ENCODE measurements at regions of chr7 and their contacts with region 1.

Region 1: GRCh38 chr7:155559519-155560108 is 13.3 kb upstream of the CNPY1 start:
- DNase-seq: no peak
- ATAC-seq: no peak
- H3K4me3 ChIP-seq: no peak overlapping the region
- H3K27ac ChIP-seq: no peak overlapping the region
- H3K4me1 ChIP-seq: peaks cover 0 to 4% (median 0%) of the 10 kb centered on the region in 12 donors
- H3K27me3 ChIP-seq: peaks cover 0 to 22% (median 0%) of the 10 kb centered on the region in 9 donors
- CTCF ChIP-seq: no peak
- POLR2A ChIP-seq: no peak

Region 2: GRCh38 chr7:155412537-155413253 is 146.9 kb before region 1 on chr7:
- intact Hi-C with region 1: loop called in 1 of 10 experiments (anchors 10 kb)
- DNase-seq: no peak
- ATAC-seq: peak in 3 of 4 donors; percentile 41 to 55 (median 47)
- H3K4me3 ChIP-seq: no peak overlapping the region
- H3K27ac ChIP-seq: no peak overlapping the region
- H3K4me1 ChIP-seq: no peaks in the 10 kb centered on the region
- H3K27me3 ChIP-seq: peaks cover 5 to 52% (median 16%) of the 10 kb centered on the region in 9 donors
- CTCF ChIP-seq: peak; percentile 32 to 64 (median 52)
- POLR2A ChIP-seq: no peak

Region 3: GRCh38 chr7:155850729-155851678 is 291.4 kb after region 1 on chr7:
- intact Hi-C with region 1: no loop called
- DNase-seq: peak in 1 of 5 donors; percentile 12
- ATAC-seq: no peak
- H3K4me3 ChIP-seq: no peak overlapping the region
- H3K27ac ChIP-seq: no peak overlapping the region
- H3K4me1 ChIP-seq: no peaks in the 10 kb centered on the region
- H3K27me3 ChIP-seq: peaks cover 0 to 17% (median under 1%) of the 10 kb centered on the region in 9 donors
- CTCF ChIP-seq: no peak
- POLR2A ChIP-seq: no peak

Region 4: DNA sequence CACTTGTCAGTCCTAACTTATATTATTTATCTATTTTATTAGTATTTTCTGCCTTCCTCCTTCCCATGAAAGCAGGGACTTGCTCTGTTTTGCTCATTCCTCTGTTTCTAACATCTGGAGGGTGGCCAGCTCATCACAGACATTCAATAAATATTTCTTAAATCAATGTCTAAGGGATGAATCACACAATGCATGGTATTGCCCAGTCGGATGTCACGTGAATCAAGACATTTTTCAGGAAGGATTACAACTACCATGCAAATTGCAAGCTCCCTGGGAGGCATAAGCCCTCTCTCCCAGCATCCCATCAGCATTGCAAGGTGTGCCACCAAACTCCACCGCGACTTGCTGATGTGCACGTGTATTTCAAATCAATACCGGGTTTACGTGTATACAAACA is 934.3 kb after region 1 on chr7:
- intact Hi-C with region 1: loop called in 1 of 10 experiments (anchors 10 kb)
- DNase-seq: no peak
- ATAC-seq: no peak
- H3K4me3 ChIP-seq: no peak overlapping the region
- H3K27ac ChIP-seq: no peak overlapping the region
- H3K4me1 ChIP-seq: no peaks in the 10 kb centered on the region
- H3K27me3 ChIP-seq: peaks cover 0 to 12% (median 0%) of the 10 kb centered on the region in 9 donors
- CTCF ChIP-seq: no peak
- POLR2A ChIP-seq: no peak